K562 (cell line): ENCODE measurements at regions of chr2 and their contacts with region 1.

Region 1: GRCh38 chr2:111705711-111706336 is 178.2 kb downstream of the ANAPC1 start:
- DNase-seq: no peak
- ATAC-seq: no peak
- H3K4me3 ChIP-seq: no peak overlapping the region
- H3K27ac ChIP-seq: no peak overlapping the region
- H3K4me1 ChIP-seq: peaks cover 7 to 16% of the 10 kb centered on the region in 2 experiments; a peak in 4 of 5 replicates
- H3K27me3 ChIP-seq: no peaks in the 10 kb centered on the region
- CTCF ChIP-seq: no peak
- EP300 ChIP-seq: no peak
- POLR2A ChIP-seq: no peak
- RAD21 ChIP-seq: no peak

Region 2: GRCh38 chr2:110804915-110805314 is 900.9 kb before region 1 on chr2:
- CTCF ChIA-PET with region 1: no interaction called
- POLR2A ChIA-PET with region 1: no interaction called
- in situ Hi-C with region 1: loop called (anchors 25 kb)
- intact Hi-C with region 1: no loop called
- DNase-seq: no peak
- ATAC-seq: no peak
- H3K4me3 ChIP-seq: no peak overlapping the region
- H3K27ac ChIP-seq: no peak overlapping the region
- H3K4me1 ChIP-seq: no peaks in the 10 kb centered on the region
- H3K27me3 ChIP-seq: peaks cover 10 to 56% of the 10 kb centered on the region in 2 experiments
- CTCF ChIP-seq: no peak
- EP300 ChIP-seq: no peak
- POLR2A ChIP-seq: no peak
- RAD21 ChIP-seq: no peak

Region 3: GRCh38 chr2:111522231-111522768 is 183.5 kb before region 1 on chr2:
- CTCF ChIA-PET with region 1: no interaction called
- POLR2A ChIA-PET with region 1: interaction called, 3 read pairs
- in situ Hi-C with region 1: loop called (anchors 25 kb)
- intact Hi-C with region 1: no loop called
- DNase-seq: no peak
- ATAC-seq: no peak
- H3K4me3 ChIP-seq: no peak overlapping the region
- H3K27ac ChIP-seq: no peak overlapping the region
- H3K4me1 ChIP-seq: peaks cover 4 to 6% of the 10 kb centered on the region in 2 experiments; a peak in 4 of 5 replicates
- H3K27me3 ChIP-seq: no peaks in the 10 kb centered on the region
- CTCF ChIP-seq: no peak
- EP300 ChIP-seq: no peak
- POLR2A ChIP-seq: no peak
- RAD21 ChIP-seq: no peak